ENCODE measurements at regions of chr3 and their contacts with region 1.

Region 1: GRCh38 chr3:39639344-39640236 is 169.8 kb upstream of the MYRIP start:
- DNase-seq: peak; percentile 66 to 94 (median 80)
- ATAC-seq: peak; percentile 98
- H3K4me3 ChIP-seq: no peak overlapping the region
- H3K27ac ChIP-seq: peak overlapping the region; percentile 86
- H3K4me1 ChIP-seq: peaks cover 4 to 22% of the 10 kb centered on the region in 2 experiments; a peak in 4 of 5 replicates
- H3K27me3 ChIP-seq: no peaks in the 10 kb centered on the region
- CTCF ChIP-seq: no peak
- EP300 ChIP-seq: peak; percentile 90
- POLR2A ChIP-seq: no peak
- RAD21 ChIP-seq: no peak

Region 2: GRCh38 chr3:39651993-39652739 is 12.6 kb after region 1 on chr3:
- CTCF ChIA-PET with region 1: no interaction called
- POLR2A ChIA-PET with region 1: interaction called, 12 read pairs
- in situ Hi-C with region 1: no loop called
- intact Hi-C with region 1: no loop called
- DNase-seq: no peak
- ATAC-seq: no peak
- H3K4me3 ChIP-seq: no peak overlapping the region
- H3K27ac ChIP-seq: no peak overlapping the region
- H3K4me1 ChIP-seq: peaks cover 0 to 5% of the 10 kb centered on the region in 2 experiments; a peak in 3 of 5 replicates
- H3K27me3 ChIP-seq: no peaks in the 10 kb centered on the region
- CTCF ChIP-seq: no peak
- EP300 ChIP-seq: no peak
- POLR2A ChIP-seq: no peak
- RAD21 ChIP-seq: no peak

Region 3: DNA sequence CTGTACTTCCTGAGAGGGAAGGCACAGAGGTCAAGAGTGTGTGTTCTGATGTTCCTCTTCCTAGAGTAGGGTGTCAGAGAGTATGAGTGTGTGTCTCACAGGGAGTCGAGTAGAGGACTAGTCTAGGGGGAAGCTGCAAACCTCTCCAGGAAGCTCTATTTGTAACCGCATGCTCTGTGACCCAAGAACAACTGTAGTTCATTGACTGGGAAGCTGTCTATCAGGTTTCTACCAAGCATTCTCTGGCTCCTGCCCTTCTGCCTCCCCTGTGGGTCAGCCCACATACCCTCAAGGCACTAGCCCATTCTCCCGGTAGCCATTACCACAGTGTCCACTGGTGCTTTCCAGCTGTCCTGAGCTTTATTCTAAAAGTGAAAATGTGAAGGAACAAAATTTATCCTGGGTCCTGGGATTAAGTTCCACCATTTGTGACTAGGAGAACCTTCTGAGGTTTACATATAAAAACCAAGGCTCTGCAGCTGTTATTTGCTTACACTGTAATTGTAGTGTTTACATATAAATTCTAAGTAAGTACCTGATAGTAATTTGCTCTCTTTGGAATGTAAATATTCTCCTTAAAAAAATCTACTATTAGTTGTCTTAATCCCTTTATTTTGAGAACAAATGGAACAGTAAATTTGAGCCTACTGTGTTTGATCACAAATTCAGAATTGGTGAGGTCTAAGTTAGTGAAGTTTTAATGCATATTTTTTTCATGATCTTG is 210.6 kb after region 1 on chr3:
- CTCF ChIA-PET with region 1: no interaction called
- POLR2A ChIA-PET with region 1: no interaction called
- in situ Hi-C with region 1: no loop called
- intact Hi-C with region 1: no loop called
- DNase-seq: no peak
- ATAC-seq: no peak
- H3K4me3 ChIP-seq: no peak overlapping the region
- H3K27ac ChIP-seq: no peak overlapping the region
- H3K4me1 ChIP-seq: no peaks in the 10 kb centered on the region
- H3K27me3 ChIP-seq: no peaks in the 10 kb centered on the region
- CTCF ChIP-seq: no peak
- EP300 ChIP-seq: no peak
- POLR2A ChIP-seq: no peak
- RAD21 ChIP-seq: no peak

Measured in K562 (cell line).